AG04450 (cell line): ENCODE measurements at regions of chr1 and their contacts with region 1.

Region 1: DNA sequence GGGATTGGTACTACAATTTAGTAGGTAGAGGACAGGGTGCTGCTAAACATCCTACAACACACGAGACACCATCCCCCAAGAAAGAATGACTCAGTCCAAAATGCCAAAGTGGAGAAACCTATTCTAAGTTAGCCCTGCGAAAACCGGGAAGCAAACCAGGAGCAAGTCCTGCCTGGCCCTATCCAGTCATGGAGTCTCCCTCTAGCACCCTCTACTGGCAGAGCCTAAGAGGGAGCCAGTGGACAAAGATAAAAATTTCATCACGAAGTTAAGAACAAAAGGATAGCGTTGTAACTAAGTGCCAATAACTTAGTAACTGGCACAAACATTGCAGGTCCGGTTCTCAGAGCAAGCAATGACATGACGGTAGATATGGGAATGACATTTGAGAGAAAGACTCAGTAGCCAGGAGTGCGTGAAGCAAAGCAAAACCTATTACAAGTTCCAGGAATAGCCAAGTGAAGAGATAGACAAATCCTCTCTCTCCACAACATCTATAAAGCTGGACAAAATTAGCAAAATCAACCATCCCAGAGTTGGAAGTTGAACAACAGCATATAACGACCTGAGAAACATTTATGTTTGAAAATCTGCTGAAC is 383.5 kb downstream of the OMA1 start:
- DNase-seq: peak; percentile 15
- H3K4me3 ChIP-seq: no peak overlapping the region
- H3K27ac ChIP-seq: no peak overlapping the region
- H3K27me3 ChIP-seq: no peaks in the 10 kb centered on the region
- CTCF ChIP-seq: peak; percentile 89

Region 2: DNA sequence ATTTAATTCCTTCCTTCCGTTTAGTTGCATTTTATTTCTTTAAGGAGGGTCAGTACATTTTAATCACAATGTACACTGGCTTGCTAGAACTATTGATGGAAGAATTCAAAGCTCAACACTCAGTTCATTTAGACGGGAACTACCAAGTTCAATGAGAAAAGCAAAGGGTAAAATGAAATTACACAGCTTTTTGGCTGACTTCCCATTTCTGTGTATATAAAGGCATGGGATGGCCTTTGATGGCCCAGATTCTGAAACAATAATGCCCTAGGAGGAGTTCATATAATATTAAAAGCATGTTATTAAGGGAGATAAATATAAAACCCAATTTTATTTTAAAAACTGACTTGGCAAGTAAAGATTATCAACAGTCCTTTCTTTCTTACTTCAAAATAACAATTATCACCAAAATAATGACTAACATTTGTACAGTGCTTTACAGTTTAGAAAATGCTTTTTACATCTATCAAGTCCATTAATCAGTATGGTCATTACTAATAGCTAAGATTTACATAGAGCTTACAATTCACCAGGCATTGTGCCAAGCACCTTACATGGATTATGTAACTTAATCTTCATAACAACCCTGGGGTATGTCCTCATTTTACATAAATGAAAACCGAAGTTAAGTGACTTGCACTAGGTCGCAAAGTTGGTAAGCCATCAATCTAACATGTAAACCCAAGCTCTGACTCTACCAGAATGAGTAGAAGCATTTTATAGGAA is 18.9 kb before region 1 on chr1:
- CTCF ChIA-PET with region 1: interaction called, 13 read pairs
- POLR2A ChIA-PET with region 1: no interaction called
- DNase-seq: no peak
- H3K4me3 ChIP-seq: no peak overlapping the region
- H3K27ac ChIP-seq: no peak overlapping the region
- H3K27me3 ChIP-seq: no peaks in the 10 kb centered on the region
- CTCF ChIP-seq: no peak